AG04450 (cell line): ENCODE measurements at regions of chr12 and their contacts with region 1.

Region 1: GRCh38 chr12:55619354-55620138 is 17.1 kb upstream of the OR10P1 start:
- DNase-seq: peak; percentile 84
- H3K4me3 ChIP-seq: no peak overlapping the region
- H3K27ac ChIP-seq: no peak overlapping the region
- H3K27me3 ChIP-seq: peaks cover 17% of the 10 kb centered on the region
- CTCF ChIP-seq: peak; percentile 79

Region 2: GRCh38 chr12:55188974-55189556 is 430.5 kb before region 1 on chr12:
- CTCF ChIA-PET with region 1: interaction called, 56 read pairs
- POLR2A ChIA-PET with region 1: no interaction called
- DNase-seq: peak; percentile 48
- H3K4me3 ChIP-seq: no peak overlapping the region
- H3K27ac ChIP-seq: no peak overlapping the region
- H3K27me3 ChIP-seq: no peaks in the 10 kb centered on the region
- CTCF ChIP-seq: peak; percentile 76

Region 3: GRCh38 chr12:55607821-55608594 is 11.5 kb before region 1 on chr12:
- CTCF ChIA-PET with region 1: interaction called, 16 read pairs
- POLR2A ChIA-PET with region 1: no interaction called
- DNase-seq: no peak
- H3K4me3 ChIP-seq: no peak overlapping the region
- H3K27ac ChIP-seq: no peak overlapping the region
- H3K27me3 ChIP-seq: peaks cover 6% of the 10 kb centered on the region
- CTCF ChIP-seq: no peak

Region 4: DNA sequence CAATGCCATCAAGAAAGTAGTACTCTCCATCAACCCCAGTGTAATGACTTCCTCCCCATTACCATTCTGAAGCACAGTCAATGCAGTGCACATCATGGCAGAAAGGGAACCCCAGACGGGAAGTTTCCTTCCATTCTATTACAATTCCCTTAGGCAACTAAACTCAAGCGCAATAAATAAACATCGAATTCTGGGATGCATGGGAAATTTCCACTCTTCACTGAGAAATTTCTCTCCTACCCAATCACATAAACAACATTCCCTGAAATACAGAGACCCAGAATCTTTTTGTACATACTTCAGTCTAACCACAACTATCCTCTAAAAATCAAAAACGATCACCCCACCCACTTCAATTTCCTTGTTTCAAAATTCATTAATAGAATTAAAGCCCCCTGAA is 178.0 kb after region 1 on chr12:
- CTCF ChIA-PET with region 1: no interaction called
- POLR2A ChIA-PET with region 1: no interaction called
- DNase-seq: no peak
- H3K4me3 ChIP-seq: no peak overlapping the region
- H3K27ac ChIP-seq: no peak overlapping the region
- H3K27me3 ChIP-seq: no peaks in the 10 kb centered on the region
- CTCF ChIP-seq: no peak